Transverse colon (tissue), 4 donors: ENCODE measurements at regions of chr10 and their contacts with region 1.

Region 1: GRCh38 chr10:77231884-77232610 is 405.6 kb downstream of the KCNMA1 start:
- DNase-seq: no peak
- H3K4me3 ChIP-seq: no peak overlapping the region
- H3K27ac ChIP-seq: no peak overlapping the region
- H3K4me1 ChIP-seq: no peaks in the 10 kb centered on the region
- H3K27me3 ChIP-seq: no peaks in the 10 kb centered on the region
- CTCF ChIP-seq: no peak
- EP300 ChIP-seq: no peak
- POLR2A ChIP-seq: no peak

Region 2: DNA sequence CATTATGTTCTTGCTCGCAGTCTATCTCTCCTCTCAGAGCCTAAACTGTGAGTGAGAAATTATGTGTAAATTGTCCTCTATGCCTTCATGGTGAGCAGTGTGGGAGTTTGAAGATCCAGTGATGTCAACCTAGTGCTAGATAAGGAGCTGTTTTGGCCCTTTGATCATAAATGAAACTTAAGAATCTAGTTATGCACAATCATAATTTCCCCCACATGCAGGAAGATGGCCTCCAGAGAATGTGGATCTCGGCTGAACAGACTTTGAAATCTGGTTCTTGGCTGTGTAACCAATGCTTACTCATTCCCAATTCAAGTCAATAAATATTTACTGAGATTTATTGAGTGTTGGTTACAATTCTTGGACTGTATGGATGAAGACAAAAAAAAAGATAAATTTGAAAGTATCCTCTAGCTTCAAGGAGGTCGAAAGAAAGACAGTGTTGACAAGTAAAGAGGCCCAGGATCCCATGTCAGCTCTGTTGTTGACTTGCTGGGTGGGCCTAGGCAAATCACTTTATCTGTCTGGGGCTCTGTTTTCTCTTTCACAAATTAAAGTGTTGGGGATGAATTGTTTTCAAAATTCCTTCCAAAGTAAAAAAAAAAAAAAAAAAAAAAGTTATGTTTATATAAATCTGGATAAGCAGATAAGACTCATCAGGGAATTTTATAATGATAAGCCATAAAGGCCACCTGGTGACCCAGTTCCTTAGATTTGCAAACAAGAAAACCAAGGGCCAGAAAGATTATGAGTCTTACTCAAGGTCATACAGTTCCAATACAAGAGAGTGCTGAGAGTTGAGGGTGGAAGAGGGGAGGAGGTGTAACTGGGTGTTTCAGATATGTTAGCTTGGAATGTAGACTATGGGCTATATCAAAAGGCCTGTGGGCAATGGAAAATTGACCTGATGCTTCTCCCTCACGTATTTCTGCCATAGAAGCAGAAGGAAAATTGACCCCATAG is 564.4 kb before region 1 on chr10:
- in situ Hi-C with region 1: no loop called
- intact Hi-C with region 1: no loop called
- DNase-seq: no peak
- H3K4me3 ChIP-seq: no peak overlapping the region
- H3K27ac ChIP-seq: no peak overlapping the region
- H3K4me1 ChIP-seq: no peaks in the 10 kb centered on the region
- H3K27me3 ChIP-seq: no peaks in the 10 kb centered on the region
- CTCF ChIP-seq: no peak
- EP300 ChIP-seq: no peak
- POLR2A ChIP-seq: no peak

Region 3: GRCh38 chr10:77101341-77101740 is 130.7 kb before region 1 on chr10:
- in situ Hi-C with region 1: no loop called
- intact Hi-C with region 1: no loop called
- DNase-seq: no peak
- H3K4me3 ChIP-seq: no peak overlapping the region
- H3K27ac ChIP-seq: no peak overlapping the region
- H3K4me1 ChIP-seq: peaks cover 0 to 3% (median 0%) of the 10 kb centered on the region in 4 donors
- H3K27me3 ChIP-seq: no peaks in the 10 kb centered on the region
- CTCF ChIP-seq: no peak
- EP300 ChIP-seq: no peak
- POLR2A ChIP-seq: no peak

Region 4: DNA sequence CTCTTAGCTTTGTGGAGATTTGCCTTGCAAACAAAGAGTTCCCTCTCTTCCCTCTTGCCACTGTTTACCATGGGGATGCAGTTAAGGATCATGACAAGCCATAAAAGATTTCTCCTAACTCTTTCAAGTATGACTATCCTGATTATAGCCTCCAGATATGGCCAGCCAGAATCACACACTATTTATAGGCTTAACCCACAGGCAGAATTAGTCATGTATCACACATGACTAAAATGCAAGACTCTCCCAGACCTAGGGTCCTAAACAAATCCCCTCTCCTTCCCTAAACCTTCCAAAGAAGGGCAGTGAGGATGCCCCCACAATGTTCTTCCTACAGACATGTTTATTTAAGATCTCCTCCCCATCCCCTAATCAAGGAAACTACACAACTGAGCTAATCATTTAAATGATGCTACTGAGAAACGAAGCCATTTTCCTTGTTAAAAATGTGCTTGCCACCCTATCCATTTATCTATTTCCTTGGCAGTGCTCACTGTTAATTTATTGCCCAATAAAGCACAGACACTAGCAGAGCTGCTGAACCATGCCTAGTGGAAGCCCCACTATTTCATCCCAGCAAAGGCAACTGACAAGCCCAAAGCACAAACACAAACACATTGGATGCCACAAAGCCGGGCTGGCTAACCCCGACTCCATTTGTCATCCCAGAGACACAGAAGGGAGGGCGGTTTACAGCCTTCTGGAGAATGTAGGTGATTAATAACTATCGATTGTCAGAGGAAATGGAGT is 42.2 kb after region 1 on chr10:
- in situ Hi-C with region 1: no loop called
- intact Hi-C with region 1: loop called (anchors 1 kb)
- DNase-seq: no peak
- H3K4me3 ChIP-seq: no peak overlapping the region
- H3K27ac ChIP-seq: peak overlapping the region; percentile 44 to 83 (median 62)
- H3K4me1 ChIP-seq: peaks cover 0 to 3% (median 0%) of the 10 kb centered on the region in 4 donors
- H3K27me3 ChIP-seq: peaks cover 3% of the 10 kb centered on the region
- CTCF ChIP-seq: no peak
- EP300 ChIP-seq: no peak
- POLR2A ChIP-seq: no peak

Region 5: DNA sequence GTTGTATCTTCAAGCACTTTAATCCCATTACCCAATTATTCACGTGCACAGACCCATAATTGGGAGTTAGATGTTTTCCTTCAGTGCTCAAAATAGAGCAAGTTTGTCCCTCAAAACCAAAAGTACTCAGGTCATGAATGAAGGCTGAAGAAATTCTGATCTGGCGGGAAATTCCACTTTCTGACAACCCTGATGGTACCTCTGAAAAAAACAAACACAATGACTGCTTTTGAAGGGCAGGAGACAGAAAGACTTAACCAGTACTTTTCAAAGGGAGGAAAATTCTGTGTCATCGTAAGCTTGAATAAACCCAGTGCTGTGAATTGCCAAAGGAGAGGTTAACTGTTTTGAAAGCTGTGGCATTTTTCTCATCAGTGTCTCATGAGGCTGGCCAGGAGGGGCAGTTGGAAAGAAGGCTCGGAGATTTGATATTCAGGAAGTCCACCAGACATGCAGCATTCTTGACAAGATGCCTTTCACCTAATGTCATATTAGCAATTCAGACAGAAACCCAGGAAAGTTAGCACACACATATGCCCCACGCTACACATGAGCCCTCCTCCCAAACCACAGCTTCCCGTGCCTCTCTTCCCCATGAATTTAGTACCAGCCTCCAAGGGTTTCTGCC is 58.6 kb after region 1 on chr10:
- in situ Hi-C with region 1: no loop called
- intact Hi-C with region 1: no loop called
- DNase-seq: no peak
- H3K4me3 ChIP-seq: no peak overlapping the region
- H3K27ac ChIP-seq: peak overlapping the region in 3 of 4 donors; percentile 27 to 73 (median 44)
- H3K4me1 ChIP-seq: peaks cover 0 to 30% (median 17%) of the 10 kb centered on the region in 4 donors
- H3K27me3 ChIP-seq: peaks cover 4% of the 10 kb centered on the region
- CTCF ChIP-seq: no peak
- EP300 ChIP-seq: no peak
- POLR2A ChIP-seq: no peak

Region 6: GRCh38 chr10:77939561-77940001 is 707.5 kb after region 1 on chr10:
- in situ Hi-C with region 1: no loop called
- intact Hi-C with region 1: no loop called
- DNase-seq: peak; percentile 46
- H3K4me3 ChIP-seq: no peak overlapping the region
- H3K27ac ChIP-seq: peak overlapping the region in 3 of 4 donors; percentile 22 to 41 (median 36)
- H3K4me1 ChIP-seq: peaks cover 0 to 17% (median 11%) of the 10 kb centered on the region in 4 donors
- H3K27me3 ChIP-seq: no peaks in the 10 kb centered on the region
- CTCF ChIP-seq: no peak
- EP300 ChIP-seq: no peak
- POLR2A ChIP-seq: no peak